Caco-2 (cell line): ENCODE measurements at regions of chr4 and their contacts with region 1.

Region 1: GRCh38 chr4:164095313-164096110 is 601.0 kb downstream of the TMA16 start:
- DNase-seq: no peak
- H3K4me3 ChIP-seq: no peak overlapping the region
- H3K4me3 Mint-ChIP-seq: no peak overlapping the region
- H3K27ac Mint-ChIP-seq: no peak overlapping the region
- H3K4me1 ChIP-seq: no peaks in the 10 kb centered on the region
- H3K4me1 Mint-ChIP-seq: no peaks in the 10 kb centered on the region
- H3K27me3 ChIP-seq: no peaks in the 10 kb centered on the region
- H3K27me3 Mint-ChIP-seq: no peaks in the 10 kb centered on the region
- CTCF ChIP-seq: no peak

Region 2: DNA sequence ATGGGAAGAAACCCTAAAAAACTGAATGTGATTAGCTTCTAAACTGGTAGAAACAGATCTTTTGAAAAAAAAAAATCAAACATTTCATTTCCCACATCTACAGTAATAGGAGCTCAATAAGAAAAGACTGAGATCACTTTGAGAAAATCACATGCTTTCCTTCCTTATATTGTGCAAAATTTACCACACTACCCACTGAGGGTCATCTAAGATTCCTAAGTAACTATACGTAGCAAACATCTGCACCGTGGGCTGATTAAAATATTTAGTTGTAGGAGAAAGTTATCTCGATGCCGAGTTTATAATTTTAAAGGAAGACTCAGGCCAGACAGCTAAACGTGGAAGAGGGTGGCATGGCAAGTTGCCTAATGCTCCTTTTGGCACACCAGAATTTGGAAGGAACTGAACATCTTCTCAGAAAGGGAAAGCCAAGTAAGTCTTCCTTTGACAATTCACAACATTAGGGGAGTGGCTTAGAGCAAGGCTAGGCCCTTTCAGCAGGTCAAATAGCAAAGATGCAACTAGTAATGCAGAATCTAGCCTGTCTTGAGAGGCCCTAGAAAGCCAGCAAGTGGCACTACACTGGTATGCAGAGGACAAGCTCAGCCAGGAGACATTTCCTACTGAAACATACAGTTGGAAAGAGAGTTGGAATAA is 473.0 kb before region 1 on chr4:
- CTCF ChIA-PET with region 1: no interaction called
- POLR2A ChIA-PET with region 1: no interaction called
- intact Hi-C with region 1: no loop called
- DNase-seq: no peak
- H3K4me3 ChIP-seq: no peak overlapping the region
- H3K4me3 Mint-ChIP-seq: no peak overlapping the region
- H3K27ac Mint-ChIP-seq: no peak overlapping the region
- H3K4me1 ChIP-seq: no peaks in the 10 kb centered on the region
- H3K4me1 Mint-ChIP-seq: no peaks in the 10 kb centered on the region
- H3K27me3 ChIP-seq: no peaks in the 10 kb centered on the region
- H3K27me3 Mint-ChIP-seq: peaks cover 8% of the 10 kb centered on the region
- CTCF ChIP-seq: no peak

Region 3: DNA sequence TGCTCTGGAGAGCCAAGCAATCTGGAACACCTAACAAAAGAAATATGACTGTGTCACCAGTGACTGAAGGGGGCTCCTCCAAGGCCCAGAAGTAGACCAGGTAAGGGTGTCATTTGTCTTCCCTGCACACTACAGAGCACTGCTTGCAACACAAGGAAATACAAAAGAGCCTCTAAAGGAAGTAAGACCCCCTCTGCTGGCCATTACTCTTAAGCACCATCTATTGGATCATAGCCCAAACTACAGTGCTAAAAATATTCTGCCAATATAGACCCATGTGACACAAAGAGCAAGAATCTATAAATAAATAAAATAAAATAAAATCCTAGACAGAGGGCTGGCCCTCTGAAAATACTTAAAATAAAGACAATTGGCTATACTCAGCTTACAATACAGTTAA is 72.3 kb before region 1 on chr4:
- CTCF ChIA-PET with region 1: no interaction called
- POLR2A ChIA-PET with region 1: no interaction called
- intact Hi-C with region 1: loop called (anchors 2 kb)
- DNase-seq: no peak
- H3K4me3 ChIP-seq: no peak overlapping the region
- H3K4me3 Mint-ChIP-seq: no peak overlapping the region
- H3K27ac Mint-ChIP-seq: no peak overlapping the region
- H3K4me1 ChIP-seq: no peaks in the 10 kb centered on the region
- H3K4me1 Mint-ChIP-seq: no peaks in the 10 kb centered on the region
- H3K27me3 ChIP-seq: no peaks in the 10 kb centered on the region
- H3K27me3 Mint-ChIP-seq: no peaks in the 10 kb centered on the region
- CTCF ChIP-seq: no peak